CD4-positive, alpha-beta memory T cell (primary cell): ENCODE measurements at regions of chr11 and their contacts with region 1.

Region 1: DNA sequence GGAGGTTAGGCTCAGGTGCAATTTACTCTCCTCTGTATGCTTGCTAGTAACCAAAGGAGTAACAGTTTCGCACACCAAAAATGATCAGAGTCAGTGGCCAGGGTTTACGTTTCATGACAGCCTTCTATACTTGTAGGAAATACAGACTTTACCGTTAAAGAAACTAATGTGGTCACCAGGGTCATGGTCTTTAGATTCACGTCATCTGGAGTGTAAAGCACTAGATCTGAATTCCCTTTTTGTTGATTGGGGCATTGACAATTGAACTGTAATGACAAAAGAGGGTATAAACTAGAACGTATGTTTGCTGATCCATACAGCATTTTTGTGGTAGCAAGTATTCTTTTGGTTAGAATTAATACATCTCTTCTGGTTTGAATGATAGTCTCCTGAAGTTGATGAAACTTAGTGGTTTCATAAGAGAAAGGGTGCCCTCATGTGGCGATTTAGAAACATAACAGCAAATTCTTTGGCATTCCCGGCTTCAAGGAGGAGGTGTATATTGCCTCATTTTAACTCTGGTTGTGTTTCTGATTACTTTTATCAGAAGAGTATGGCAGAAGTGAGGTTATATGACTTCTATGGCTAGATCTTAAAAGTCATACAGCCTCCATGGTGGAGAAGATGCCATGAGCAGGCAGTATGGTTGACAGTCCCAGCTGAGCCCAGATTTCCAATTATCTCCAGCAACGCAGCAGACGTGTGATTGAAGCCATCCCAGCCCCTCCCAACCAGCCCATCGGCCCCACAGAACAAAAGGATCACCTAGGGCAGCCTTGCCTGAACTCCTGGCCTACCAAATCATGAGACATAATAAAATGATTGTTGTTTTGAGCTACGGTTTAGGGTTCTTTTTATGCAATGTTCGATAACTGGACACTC is 35.1 kb downstream of the MMP7 start:
- DNase-seq: peak; percentile 59 to 75 (median 73)
- H3K4me3 ChIP-seq: no peak overlapping the region
- H3K4me3 Mint-ChIP-seq: peak overlapping the region in 1 of 8 donors; percentile 6
- H3K27ac ChIP-seq: no peak overlapping the region
- H3K27ac Mint-ChIP-seq: no peak overlapping the region
- H3K4me1 ChIP-seq: peaks cover 4% of the 10 kb centered on the region
- H3K4me1 Mint-ChIP-seq: peaks cover 0 to 7% (median 5%) of the 10 kb centered on the region in 4 donors
- H3K27me3 ChIP-seq: peaks cover 4% of the 10 kb centered on the region
- H3K27me3 Mint-ChIP-seq: peaks cover 5 to 7% of the 10 kb centered on the region in 2 donors

Region 2: DNA sequence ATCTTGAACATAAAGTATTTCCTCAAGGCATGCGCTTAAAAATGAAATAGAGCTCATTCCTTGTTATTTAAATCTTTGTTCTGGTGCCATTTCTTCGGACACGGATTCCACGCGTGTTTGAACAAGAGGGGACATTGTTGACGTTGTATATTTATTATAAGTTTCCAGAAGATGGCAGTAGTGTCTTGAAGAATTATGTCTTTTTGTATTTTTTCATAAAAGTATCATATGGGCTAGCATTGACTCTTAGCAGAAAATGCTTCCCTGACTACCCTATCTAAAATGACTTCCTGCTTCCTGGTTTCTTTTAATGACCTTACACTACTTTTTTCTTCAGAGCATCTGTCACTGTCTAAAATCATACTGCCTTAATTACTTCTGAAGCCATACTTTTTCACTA is 128.0 kb before region 1 on chr11:
- CTCF ChIA-PET with region 1: interaction called, 26 read pairs
- POLR2A ChIA-PET with region 1: interaction called, 4 read pairs
- intact Hi-C with region 1: loop called (anchors 1 kb)
- DNase-seq: peak in 4 of 5 donors; percentile 41 to 53 (median 50)
- H3K4me3 ChIP-seq: no peak overlapping the region
- H3K4me3 Mint-ChIP-seq: peak overlapping the region in 3 of 8 donors; percentile 7 to 27 (median 17)
- H3K27ac ChIP-seq: no peak overlapping the region
- H3K27ac Mint-ChIP-seq: peak overlapping the region; percentile 33 to 93 (median 72)
- H3K4me1 ChIP-seq: peaks cover 21% of the 10 kb centered on the region
- H3K4me1 Mint-ChIP-seq: peaks cover 27 to 37% (median 28%) of the 10 kb centered on the region in 4 donors
- H3K27me3 ChIP-seq: no peaks in the 10 kb centered on the region
- H3K27me3 Mint-ChIP-seq: no peaks in the 10 kb centered on the region

Region 3: GRCh38 chr11:102560555-102561011 is 65.2 kb after region 1 on chr11:
- CTCF ChIA-PET with region 1: no interaction called
- POLR2A ChIA-PET with region 1: no interaction called
- intact Hi-C with region 1: no loop called
- DNase-seq: peak in 4 of 5 donors; percentile 21 to 34 (median 28)
- H3K4me3 ChIP-seq: no peak overlapping the region
- H3K4me3 Mint-ChIP-seq: peak overlapping the region; percentile 73 to 87 (median 80)
- H3K27ac ChIP-seq: peak overlapping the region; percentile 11
- H3K27ac Mint-ChIP-seq: peak overlapping the region; percentile 72 to 97 (median 86)
- H3K4me1 ChIP-seq: peaks cover 34% of the 10 kb centered on the region
- H3K4me1 Mint-ChIP-seq: peaks cover 29 to 48% (median 39%) of the 10 kb centered on the region in 4 donors
- H3K27me3 ChIP-seq: no peaks in the 10 kb centered on the region
- H3K27me3 Mint-ChIP-seq: no peaks in the 10 kb centered on the region

Region 4: DNA sequence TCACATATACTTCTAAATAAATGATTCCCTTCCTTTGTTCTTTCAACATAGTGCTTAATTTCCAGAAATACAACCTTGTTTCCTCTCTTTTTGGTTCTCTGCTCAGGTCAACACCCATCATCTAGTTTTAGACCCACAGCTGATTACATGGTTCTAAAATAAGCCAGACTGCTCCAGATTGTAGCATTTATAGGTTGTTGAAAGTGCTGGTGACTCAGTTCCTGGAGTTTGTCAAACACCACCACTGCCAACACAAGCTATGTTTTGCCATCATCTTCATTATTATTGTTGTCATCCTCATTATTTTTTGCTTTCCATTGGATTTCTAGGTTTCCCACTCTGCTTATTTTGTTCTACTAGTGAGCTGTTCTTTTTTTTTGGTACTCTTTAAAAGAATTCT is 152.0 kb after region 1 on chr11:
- CTCF ChIA-PET with region 1: no interaction called
- POLR2A ChIA-PET with region 1: no interaction called
- intact Hi-C with region 1: no loop called
- DNase-seq: no peak
- H3K4me3 ChIP-seq: no peak overlapping the region
- H3K4me3 Mint-ChIP-seq: no peak overlapping the region
- H3K27ac ChIP-seq: no peak overlapping the region
- H3K27ac Mint-ChIP-seq: no peak overlapping the region
- H3K4me1 ChIP-seq: no peaks in the 10 kb centered on the region
- H3K4me1 Mint-ChIP-seq: no peaks in the 10 kb centered on the region
- H3K27me3 ChIP-seq: no peaks in the 10 kb centered on the region
- H3K27me3 Mint-ChIP-seq: peaks cover 8 to 17% of the 10 kb centered on the region in 2 donors

Region 5: GRCh38 chr11:102776454-102776853 is 281.1 kb after region 1 on chr11:
- CTCF ChIA-PET with region 1: no interaction called
- POLR2A ChIA-PET with region 1: no interaction called
- intact Hi-C with region 1: no loop called
- DNase-seq: no peak
- H3K4me3 ChIP-seq: no peak overlapping the region
- H3K4me3 Mint-ChIP-seq: no peak overlapping the region
- H3K27ac ChIP-seq: no peak overlapping the region
- H3K27ac Mint-ChIP-seq: no peak overlapping the region
- H3K4me1 ChIP-seq: no peaks in the 10 kb centered on the region
- H3K4me1 Mint-ChIP-seq: no peaks in the 10 kb centered on the region
- H3K27me3 ChIP-seq: no peaks in the 10 kb centered on the region
- H3K27me3 Mint-ChIP-seq: peaks cover 2 to 7% of the 10 kb centered on the region in 2 donors